CD4-positive, alpha-beta memory T cell (primary cell): ENCODE measurements at regions of chr14 and their contacts with region 1.

Region 1: GRCh38 chr14:21241218-21241819 is 27.9 kb downstream of the HNRNPC start:
- DNase-seq: peak in 3 of 5 donors; percentile 39 to 43 (median 42)
- H3K4me3 ChIP-seq: no peak overlapping the region
- H3K4me3 Mint-ChIP-seq: peak overlapping the region in 4 of 8 donors; percentile 9 to 69 (median 34)
- H3K27ac ChIP-seq: peak overlapping the region; percentile 4
- H3K27ac Mint-ChIP-seq: peak overlapping the region in 6 of 7 donors; percentile 3 to 90 (median 66)
- H3K4me1 ChIP-seq: peaks cover 83% of the 10 kb centered on the region
- H3K4me1 Mint-ChIP-seq: peaks cover 43 to 92% (median 67%) of the 10 kb centered on the region in 4 donors
- H3K27me3 ChIP-seq: no peaks in the 10 kb centered on the region
- H3K27me3 Mint-ChIP-seq: no peaks in the 10 kb centered on the region

Region 2: GRCh38 chr14:21041676-21042433 is 199.5 kb before region 1 on chr14 and contains the start of gene RNASE7:
- CTCF ChIA-PET with region 1: no interaction called
- POLR2A ChIA-PET with region 1: no interaction called
- intact Hi-C with region 1: no loop called
- DNase-seq: no peak
- H3K4me3 ChIP-seq: no peak within 1 kb of the TSS
- H3K4me3 Mint-ChIP-seq: peak within 1 kb of the TSS in 1 of 8 donors; percentile 3
- H3K27ac ChIP-seq: no peak within 1 kb of the TSS
- H3K27ac Mint-ChIP-seq: peak within 1 kb of the TSS in 4 of 7 donors; percentile 58 to 73 (median 68)
- H3K4me1 ChIP-seq: peaks cover 18% of the 10 kb centered on the region
- H3K4me1 Mint-ChIP-seq: peaks cover 11 to 40% (median 18%) of the 10 kb centered on the region in 4 donors
- H3K27me3 ChIP-seq: no peaks in the 10 kb centered on the region
- H3K27me3 Mint-ChIP-seq: no peaks in the 10 kb centered on the region
- total RNA-seq, gene RNASE7: not detected

Region 3: GRCh38 chr14:21194597-21194996 is 46.7 kb before region 1 on chr14:
- CTCF ChIA-PET with region 1: no interaction called
- POLR2A ChIA-PET with region 1: no interaction called
- intact Hi-C with region 1: no loop called
- DNase-seq: no peak
- H3K4me3 ChIP-seq: no peak overlapping the region
- H3K4me3 Mint-ChIP-seq: no peak overlapping the region
- H3K27ac ChIP-seq: no peak overlapping the region
- H3K27ac Mint-ChIP-seq: no peak overlapping the region
- H3K4me1 ChIP-seq: peaks cover 12% of the 10 kb centered on the region
- H3K4me1 Mint-ChIP-seq: peaks cover 4 to 16% (median 8%) of the 10 kb centered on the region in 4 donors
- H3K27me3 ChIP-seq: no peaks in the 10 kb centered on the region
- H3K27me3 Mint-ChIP-seq: no peaks in the 10 kb centered on the region

Region 4: DNA sequence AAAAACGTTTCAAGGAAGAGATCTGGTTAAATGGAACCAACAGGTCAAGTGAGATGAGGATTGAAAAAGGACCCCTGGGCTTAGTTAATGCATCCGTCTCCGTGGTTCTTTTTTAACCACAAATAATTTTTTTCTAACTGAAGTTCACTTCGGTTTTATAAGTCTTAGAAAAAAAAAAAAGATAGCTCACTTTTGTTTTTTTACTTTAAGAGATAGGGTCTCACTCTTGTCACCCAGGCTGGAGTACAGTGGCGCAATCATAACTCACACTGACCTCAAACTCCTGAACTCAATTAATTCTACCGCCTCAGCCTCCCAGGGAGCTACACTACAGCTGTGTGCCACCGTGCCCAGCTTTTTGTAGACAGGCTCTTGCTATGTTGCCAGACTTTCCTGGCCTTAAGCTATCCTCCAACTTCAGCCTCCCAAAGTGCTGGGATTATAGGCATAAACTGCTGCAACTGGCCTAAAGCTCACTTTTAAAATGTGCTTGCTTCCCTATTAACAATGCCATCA is 16.1 kb after region 1 on chr14:
- CTCF ChIA-PET with region 1: interaction called, 10 read pairs
- POLR2A ChIA-PET with region 1: interaction called, 10 read pairs
- intact Hi-C with region 1: no loop called
- DNase-seq: no peak
- H3K4me3 ChIP-seq: peak overlapping the region in 1 of 2 donors; percentile 1
- H3K4me3 Mint-ChIP-seq: peak overlapping the region; percentile 69 to 82 (median 76)
- H3K27ac ChIP-seq: peak overlapping the region; percentile 27
- H3K27ac Mint-ChIP-seq: peak overlapping the region; percentile 14 to 90 (median 78)
- H3K4me1 ChIP-seq: peaks cover 89% of the 10 kb centered on the region
- H3K4me1 Mint-ChIP-seq: peaks cover 56 to 91% (median 73%) of the 10 kb centered on the region in 4 donors
- H3K27me3 ChIP-seq: no peaks in the 10 kb centered on the region
- H3K27me3 Mint-ChIP-seq: no peaks in the 10 kb centered on the region

Region 5: GRCh38 chr14:21263656-21264411 is 22.5 kb after region 1 on chr14:
- CTCF ChIA-PET with region 1: interaction called, 7 read pairs
- POLR2A ChIA-PET with region 1: interaction called, 10 read pairs
- intact Hi-C with region 1: no loop called
- DNase-seq: peak in 2 of 5 donors; percentile 46 to 49
- H3K4me3 ChIP-seq: peak overlapping the region; percentile 3 to 4
- H3K4me3 Mint-ChIP-seq: peak overlapping the region; percentile 64 to 100 (median 100)
- H3K27ac ChIP-seq: peak overlapping the region; percentile 98
- H3K27ac Mint-ChIP-seq: peak overlapping the region; percentile 55 to 96 (median 83)
- H3K4me1 ChIP-seq: peaks cover 91% of the 10 kb centered on the region
- H3K4me1 Mint-ChIP-seq: peaks cover 59 to 89% (median 75%) of the 10 kb centered on the region in 4 donors
- H3K27me3 ChIP-seq: no peaks in the 10 kb centered on the region
- H3K27me3 Mint-ChIP-seq: no peaks in the 10 kb centered on the region

Region 6: GRCh38 chr14:21383848-21384493 is 142.7 kb after region 1 on chr14 and contains the start of gene SUPT16H:
- CTCF ChIA-PET with region 1: interaction called, 3 read pairs
- POLR2A ChIA-PET with region 1: no interaction called
- intact Hi-C with region 1: loop called (anchors 2 kb)
- DNase-seq: peak; percentile 91 to 96 (median 93)
- H3K4me3 ChIP-seq: peak within 1 kb of the TSS; percentile 98 to 99
- H3K4me3 Mint-ChIP-seq: peak within 1 kb of the TSS; percentile 95 to 100 (median 97)
- H3K27ac ChIP-seq: peak within 1 kb of the TSS; percentile 82
- H3K27ac Mint-ChIP-seq: peak within 1 kb of the TSS; percentile 96 to 100 (median 99)
- H3K4me1 ChIP-seq: peaks cover 47% of the 10 kb centered on the region
- H3K4me1 Mint-ChIP-seq: peaks cover 25 to 53% (median 38%) of the 10 kb centered on the region in 4 donors
- H3K27me3 ChIP-seq: no peaks in the 10 kb centered on the region
- H3K27me3 Mint-ChIP-seq: no peaks in the 10 kb centered on the region
- total RNA-seq, gene SUPT16H: 84.5 to 87.2 TPM